CD14-positive monocyte (primary cell): ENCODE measurements at regions of chr1 and their contacts with region 1.

Region 1: DNA sequence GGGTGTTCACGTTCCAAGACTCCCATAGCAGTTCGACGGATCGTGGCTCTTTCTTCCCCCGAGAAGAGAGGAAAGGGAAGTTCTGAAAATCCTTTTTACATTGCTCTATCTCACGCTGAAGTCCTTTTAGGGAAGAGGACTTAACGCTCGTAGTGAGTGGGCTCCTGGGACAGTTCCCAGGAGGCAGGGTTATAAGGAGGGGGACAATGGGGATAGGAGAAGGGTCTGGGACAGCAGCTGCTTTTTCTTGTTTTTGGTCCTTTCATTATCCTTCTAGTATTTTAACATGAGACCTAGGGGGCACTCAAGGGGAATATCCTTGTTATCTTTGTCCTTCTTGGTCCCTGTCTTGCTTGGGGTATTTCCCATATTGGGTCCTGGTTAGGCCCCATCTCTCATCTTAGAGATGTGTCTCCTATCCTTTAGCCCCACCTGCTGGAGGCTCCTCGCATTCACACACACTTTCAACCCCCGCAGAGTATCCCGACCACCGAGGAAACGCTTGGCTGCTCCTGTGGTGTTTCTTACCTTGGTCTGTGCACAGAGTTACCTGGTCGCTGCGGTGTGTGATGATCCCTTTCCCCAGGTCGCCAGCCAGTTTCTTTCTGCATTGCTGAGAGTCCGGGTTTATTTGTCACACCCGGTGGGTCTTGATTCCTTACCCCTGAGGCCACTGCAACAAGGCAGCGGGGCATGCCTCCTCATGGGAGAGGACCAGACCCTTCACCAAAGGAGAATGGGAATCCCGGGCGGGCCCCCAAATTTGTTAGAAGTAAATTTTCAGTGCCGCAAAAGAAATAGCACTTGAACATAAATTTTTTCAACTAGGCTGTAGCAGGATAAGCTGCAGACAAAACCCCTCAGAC is 29.7 kb downstream of the SCCPDH start:
- DNase-seq: peak; percentile 52 to 74 (median 57)
- H3K4me3 ChIP-seq: no peak overlapping the region
- H3K4me3 Mint-ChIP-seq: peak overlapping the region in 1 of 2 donors; percentile 13
- H3K27ac ChIP-seq: no peak overlapping the region
- H3K27ac Mint-ChIP-seq: peak overlapping the region in 4 of 7 donors; percentile 55 to 75 (median 58)
- H3K4me1 ChIP-seq: peaks cover 0 to 3% of the 10 kb centered on the region in 2 donors
- H3K4me1 Mint-ChIP-seq: peaks cover 18% of the 10 kb centered on the region
- H3K27me3 ChIP-seq: no peaks in the 10 kb centered on the region
- H3K27me3 Mint-ChIP-seq: no peaks in the 10 kb centered on the region
- CTCF ChIP-seq: peak; percentile 76

Region 2: DNA sequence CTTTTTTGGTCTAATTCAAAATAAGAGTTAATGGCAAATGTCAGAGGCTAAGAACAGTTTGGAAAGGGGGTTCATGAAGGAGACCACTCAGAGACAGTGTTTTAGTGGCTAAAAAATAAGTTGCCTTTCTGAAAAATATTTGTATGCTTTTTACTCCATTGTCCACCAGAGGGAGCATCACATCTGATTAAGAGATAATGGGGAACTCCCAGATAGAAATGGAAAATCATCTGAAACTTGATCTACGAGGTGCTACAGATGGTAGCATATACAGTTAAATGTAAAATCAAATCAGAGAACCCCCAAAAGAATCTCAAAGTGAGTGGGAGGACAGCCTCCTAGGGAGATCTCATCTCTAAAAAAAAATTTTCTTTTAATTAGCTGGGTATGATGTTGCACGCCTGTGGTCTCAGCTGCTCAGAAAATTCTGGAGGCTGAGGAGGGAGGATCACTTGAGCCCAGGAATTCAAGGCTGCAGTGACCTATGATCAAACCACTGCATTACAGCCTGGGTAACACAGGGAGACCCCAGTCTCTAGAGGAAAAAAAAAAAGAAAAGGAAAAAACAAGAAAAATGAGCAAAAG is 256.5 kb before region 1 on chr1:
- intact Hi-C with region 1: loop called (anchors 5 to 10 kb)
- DNase-seq: peak; percentile 47 to 66 (median 65)
- H3K4me3 ChIP-seq: no peak overlapping the region
- H3K4me3 Mint-ChIP-seq: no peak overlapping the region
- H3K27ac ChIP-seq: no peak overlapping the region
- H3K27ac Mint-ChIP-seq: peak overlapping the region in 2 of 7 donors; percentile 69 to 81
- H3K4me1 ChIP-seq: no peaks in the 10 kb centered on the region
- H3K4me1 Mint-ChIP-seq: peaks cover 6% of the 10 kb centered on the region
- H3K27me3 ChIP-seq: no peaks in the 10 kb centered on the region
- H3K27me3 Mint-ChIP-seq: no peaks in the 10 kb centered on the region
- CTCF ChIP-seq: peak; percentile 77

Region 3: GRCh38 chr1:246689409-246690008 is 64.4 kb before region 1 on chr1:
- intact Hi-C with region 1: loop called (anchors 2 to 5 kb)
- DNase-seq: peak; percentile 78 to 88 (median 83)
- H3K4me3 ChIP-seq: peak overlapping the region in 1 of 3 experiments; percentile 43
- H3K4me3 Mint-ChIP-seq: peak overlapping the region; percentile 48 to 65
- H3K27ac ChIP-seq: no peak overlapping the region
- H3K27ac Mint-ChIP-seq: peak overlapping the region in 2 of 7 donors; percentile 2 to 4
- H3K4me1 ChIP-seq: peaks cover 7 to 9% of the 10 kb centered on the region in 2 donors
- H3K4me1 Mint-ChIP-seq: peaks cover 11% of the 10 kb centered on the region
- H3K27me3 ChIP-seq: no peaks in the 10 kb centered on the region
- H3K27me3 Mint-ChIP-seq: peaks cover 0 to 5% (median 3%) of the 10 kb centered on the region in 3 donors
- CTCF ChIP-seq: peak; percentile 83